CD4-positive, alpha-beta memory T cell (primary cell): ENCODE measurements at regions of chr7 and their contacts with region 1.

Region 1: GRCh38 chr7:135160098-135160857 is 10.2 kb downstream of the CYREN start:
- DNase-seq: no peak
- H3K4me3 ChIP-seq: no peak overlapping the region
- H3K4me3 Mint-ChIP-seq: peak overlapping the region in 3 of 8 donors; percentile 40 to 76 (median 55)
- H3K27ac ChIP-seq: no peak overlapping the region
- H3K27ac Mint-ChIP-seq: peak overlapping the region; percentile 24 to 85 (median 74)
- H3K4me1 ChIP-seq: peaks cover 39% of the 10 kb centered on the region
- H3K4me1 Mint-ChIP-seq: peaks cover 26 to 69% (median 52%) of the 10 kb centered on the region in 4 donors
- H3K27me3 ChIP-seq: no peaks in the 10 kb centered on the region
- H3K27me3 Mint-ChIP-seq: no peaks in the 10 kb centered on the region

Region 2: GRCh38 chr7:135147899-135148721 is 12.2 kb before region 1 on chr7 and contains the start of gene TMEM140:
- CTCF ChIA-PET with region 1: interaction called, 113 read pairs
- POLR2A ChIA-PET with region 1: interaction called, 215 read pairs
- intact Hi-C with region 1: loop called (anchors 1 kb)
- DNase-seq: peak; percentile 74 to 85 (median 80)
- H3K4me3 ChIP-seq: peak within 1 kb of the TSS; percentile 48 to 67
- H3K4me3 Mint-ChIP-seq: peak within 1 kb of the TSS; percentile 85 to 96 (median 92)
- H3K27ac ChIP-seq: peak within 1 kb of the TSS; percentile 90
- H3K27ac Mint-ChIP-seq: peak within 1 kb of the TSS; percentile 90 to 99 (median 98)
- H3K4me1 ChIP-seq: peaks cover 61% of the 10 kb centered on the region
- H3K4me1 Mint-ChIP-seq: peaks cover 44 to 78% (median 59%) of the 10 kb centered on the region in 4 donors
- H3K27me3 ChIP-seq: no peaks in the 10 kb centered on the region
- H3K27me3 Mint-ChIP-seq: no peaks in the 10 kb centered on the region
- total RNA-seq, gene TMEM140: 28.3 to 31.3 TPM